CD14-positive monocyte (primary cell): ENCODE measurements at regions of chr7 and their contacts with region 1.

Region 1: DNA sequence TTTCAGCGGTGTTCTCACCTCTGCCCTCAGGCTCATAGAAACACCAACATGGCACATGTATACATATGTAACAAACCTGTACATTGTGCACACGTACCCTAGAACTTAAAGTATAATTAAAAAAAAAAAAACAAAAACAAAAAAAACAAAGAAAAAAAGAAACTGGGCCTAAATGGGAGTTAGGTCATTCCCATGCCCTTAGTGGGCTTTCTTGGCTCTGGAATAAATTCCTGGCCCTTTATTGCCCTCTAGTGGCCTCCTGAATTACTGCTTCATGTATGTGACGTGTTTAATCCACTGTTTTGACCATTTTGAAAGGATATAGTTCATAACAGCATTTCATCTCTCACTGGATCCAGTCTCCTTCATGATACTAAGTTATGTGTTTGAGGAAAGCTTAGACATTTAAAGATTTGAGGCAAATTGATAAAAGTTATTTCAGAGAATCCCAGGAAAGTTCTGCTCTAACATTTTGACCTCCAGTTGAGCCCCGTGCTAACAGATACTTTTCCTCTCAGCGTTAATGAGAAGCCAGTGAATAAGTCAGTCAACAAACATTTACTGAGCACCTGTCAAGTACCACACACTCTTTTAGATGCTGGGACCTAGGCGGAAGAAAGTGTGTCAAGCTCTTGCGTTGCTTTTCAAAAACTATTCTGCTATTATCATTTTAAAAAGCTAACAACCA is 54.7 kb upstream of the SYPL1 start:
- DNase-seq: peak; percentile 29 to 77 (median 59)
- H3K4me3 ChIP-seq: no peak overlapping the region
- H3K4me3 Mint-ChIP-seq: no peak overlapping the region
- H3K27ac ChIP-seq: no peak overlapping the region
- H3K27ac Mint-ChIP-seq: peak overlapping the region in 3 of 7 donors; percentile 38 to 75 (median 64)
- H3K4me1 ChIP-seq: peaks cover 8 to 12% of the 10 kb centered on the region in 2 donors
- H3K4me1 Mint-ChIP-seq: peaks cover 10% of the 10 kb centered on the region
- H3K27me3 ChIP-seq: peaks cover 16 to 36% of the 10 kb centered on the region in 2 donors
- H3K27me3 Mint-ChIP-seq: peaks cover 17 to 43% (median 24%) of the 10 kb centered on the region in 3 donors
- CTCF ChIP-seq: peak; percentile 89

Region 2: DNA sequence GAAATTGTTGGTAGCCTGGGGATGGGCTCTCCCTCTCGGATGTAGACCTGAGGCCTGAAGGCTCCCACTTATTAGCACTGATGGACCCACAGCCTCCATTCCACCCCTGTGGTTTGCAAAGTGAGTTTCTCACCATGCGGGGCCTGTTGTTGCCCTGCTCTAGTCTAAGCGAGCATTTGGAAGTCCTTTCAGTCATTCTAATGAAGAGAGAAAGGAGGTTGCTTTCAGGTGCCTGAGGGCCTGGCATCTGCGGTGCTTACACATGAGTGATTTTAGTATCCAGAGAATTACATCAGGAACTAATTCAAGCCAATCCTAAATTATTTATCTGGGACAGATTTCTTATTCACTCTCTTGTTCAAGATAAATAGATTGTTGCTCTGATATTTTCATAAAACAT is 56.4 kb after region 1 on chr7:
- intact Hi-C with region 1: loop called in 1 of 2 experiments (anchors 10 kb)
- DNase-seq: no peak
- H3K4me3 ChIP-seq: no peak overlapping the region
- H3K4me3 Mint-ChIP-seq: no peak overlapping the region
- H3K27ac ChIP-seq: no peak overlapping the region
- H3K27ac Mint-ChIP-seq: no peak overlapping the region
- H3K4me1 ChIP-seq: no peaks in the 10 kb centered on the region
- H3K4me1 Mint-ChIP-seq: no peaks in the 10 kb centered on the region
- H3K27me3 ChIP-seq: peaks cover 0 to 5% of the 10 kb centered on the region in 2 donors
- H3K27me3 Mint-ChIP-seq: peaks cover 7 to 15% (median 9%) of the 10 kb centered on the region in 3 donors
- CTCF ChIP-seq: no peak